HepG2 (cell line): ENCODE measurements at regions of chr13 and their contacts with region 1.

Region 1: GRCh38 chr13:114099918-114100445 is 32.4 kb downstream of the RASA3 start:
- DNase-seq: peak; percentile 15
- ATAC-seq: peak; percentile 46
- H3K4me3 ChIP-seq: no peak overlapping the region
- H3K27ac ChIP-seq: no peak overlapping the region
- H3K4me1 ChIP-seq: no peaks in the 10 kb centered on the region
- H3K27me3 ChIP-seq: peaks cover 4 to 36% of the 10 kb centered on the region in 2 experiments; a peak in 4 of 5 replicates
- CTCF ChIP-seq: no peak
- EP300 ChIP-seq: no peak
- POLR2A ChIP-seq: no peak
- RAD21 ChIP-seq: no peak

Region 2: GRCh38 chr13:114110091-114110829 is 10.3 kb after region 1 on chr13:
- CTCF ChIA-PET with region 1: no interaction called
- POLR2A ChIA-PET with region 1: no interaction called
- in situ Hi-C with region 1: no loop called
- intact Hi-C with region 1: loop called (anchors 2 kb)
- DNase-seq: no peak
- ATAC-seq: peak; percentile 33
- H3K4me3 ChIP-seq: no peak overlapping the region
- H3K27ac ChIP-seq: no peak overlapping the region
- H3K4me1 ChIP-seq: peaks cover 9% of the 10 kb centered on the region
- H3K27me3 ChIP-seq: peaks cover 21 to 87% of the 10 kb centered on the region in 2 experiments
- CTCF ChIP-seq: no peak
- EP300 ChIP-seq: no peak
- POLR2A ChIP-seq: no peak
- RAD21 ChIP-seq: no peak

Region 3: DNA sequence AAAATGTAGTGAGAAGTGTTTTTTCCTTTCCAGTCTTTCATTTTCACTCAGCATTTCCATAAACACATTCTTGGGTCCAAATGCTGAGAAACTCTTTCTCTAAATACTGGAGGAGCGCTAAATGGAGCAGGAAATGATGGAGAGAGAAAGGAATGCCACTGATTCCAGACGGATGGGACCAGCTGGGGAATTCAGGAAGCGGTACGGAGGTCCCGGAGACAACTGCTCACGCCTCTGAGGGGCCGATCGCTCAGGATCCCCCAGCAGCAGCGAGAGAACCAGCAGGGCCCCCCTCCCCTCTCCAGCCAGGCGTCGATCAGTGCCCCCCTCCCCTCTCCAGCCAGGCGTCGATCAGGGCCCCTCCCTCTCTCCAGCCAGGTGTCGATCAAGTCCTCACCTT is 19.2 kb after region 1 on chr13:
- CTCF ChIA-PET with region 1: no interaction called
- POLR2A ChIA-PET with region 1: no interaction called
- in situ Hi-C with region 1: no loop called
- intact Hi-C with region 1: loop called (anchors 2 kb)
- DNase-seq: peak; percentile 30
- ATAC-seq: peak; percentile 31; the same call in 2 of the 3 replicates
- H3K4me3 ChIP-seq: no peak overlapping the region
- H3K27ac ChIP-seq: no peak overlapping the region
- H3K4me1 ChIP-seq: peaks cover 34% of the 10 kb centered on the region
- H3K27me3 ChIP-seq: peaks cover 3 to 32% of the 10 kb centered on the region in 2 experiments; a peak in 4 of 5 replicates
- CTCF ChIP-seq: no peak
- EP300 ChIP-seq: no peak
- POLR2A ChIP-seq: no peak
- RAD21 ChIP-seq: no peak